ENCODE measurements at regions of chr16 and their contacts with region 1.

Region 1: GRCh38 chr16:50228364-50228868 is 37.9 kb upstream of the ADCY7 start:
- DNase-seq: no peak
- H3K4me3 ChIP-seq: no peak overlapping the region
- H3K27ac ChIP-seq: no peak overlapping the region
- H3K4me1 ChIP-seq: no peaks in the 10 kb centered on the region
- H3K27me3 ChIP-seq: no peaks in the 10 kb centered on the region
- CTCF ChIP-seq: no peak

Region 2: DNA sequence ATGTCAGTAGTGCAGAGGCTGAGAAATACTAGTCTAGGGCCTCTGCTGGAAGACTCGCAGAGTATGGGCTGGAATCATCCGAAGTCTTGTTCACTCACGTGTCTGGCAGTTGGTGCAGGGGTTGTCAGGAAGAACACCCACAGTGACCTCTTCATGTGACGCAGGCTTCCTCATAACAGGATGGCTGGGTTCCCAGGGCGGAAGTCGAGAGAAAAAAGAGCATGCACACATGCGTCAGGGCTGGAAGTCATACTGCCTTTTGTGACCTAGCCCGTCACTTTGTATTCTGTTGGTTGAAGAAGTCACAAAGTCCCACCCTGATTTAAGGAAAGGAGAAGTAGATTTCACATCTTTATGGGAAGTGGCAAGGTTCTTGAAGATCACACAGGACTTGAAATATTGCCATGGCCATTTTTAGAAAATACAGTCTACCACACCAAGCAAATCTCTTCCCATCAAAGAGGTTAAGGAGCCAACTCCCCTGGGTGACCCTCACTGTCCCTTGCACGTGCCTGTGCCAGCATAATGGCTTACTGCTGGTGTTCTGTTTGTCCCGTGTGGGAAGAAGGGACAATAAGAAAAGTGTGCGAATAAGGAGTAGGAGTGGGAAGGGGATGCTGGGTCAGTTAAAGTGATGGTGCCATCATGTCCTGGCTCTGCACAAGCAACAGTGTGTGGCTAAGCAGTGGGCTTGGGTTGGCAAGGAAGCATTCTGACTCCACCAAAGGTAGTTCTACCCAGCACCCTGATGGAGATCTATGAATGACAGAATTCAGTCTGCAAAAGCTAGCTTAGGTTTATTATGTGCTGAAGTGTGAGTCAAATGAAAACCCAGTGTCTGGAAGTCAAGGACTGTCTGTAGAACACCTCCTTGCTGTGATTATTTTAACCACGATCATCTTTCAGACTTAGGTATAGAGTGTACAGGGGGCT is 134.5 kb before region 1 on chr16:
- CTCF ChIA-PET with region 1: no interaction called
- dilution Hi-C with region 1: no loop called
- in situ Hi-C with region 1: no loop called
- intact Hi-C with region 1: no loop called
- DNase-seq: no peak
- H3K4me3 ChIP-seq: no peak overlapping the region
- H3K27ac ChIP-seq: no peak overlapping the region
- H3K4me1 ChIP-seq: peaks cover under 1% of the 10 kb centered on the region
- H3K27me3 ChIP-seq: no peaks in the 10 kb centered on the region
- CTCF ChIP-seq: no peak

Region 3: GRCh38 chr16:50297301-50298067 is 69.1 kb after region 1 on chr16:
- CTCF ChIA-PET with region 1: no interaction called
- dilution Hi-C with region 1: loop called (anchors 5 kb)
- in situ Hi-C with region 1: no loop called
- intact Hi-C with region 1: no loop called
- DNase-seq: no peak
- H3K4me3 ChIP-seq: no peak overlapping the region
- H3K27ac ChIP-seq: no peak overlapping the region
- H3K4me1 ChIP-seq: peaks cover 8% of the 10 kb centered on the region
- H3K27me3 ChIP-seq: no peaks in the 10 kb centered on the region
- CTCF ChIP-seq: no peak